HCT116 (cell line): ENCODE measurements at regions of chr10 and their contacts with region 1.

Region 1: DNA sequence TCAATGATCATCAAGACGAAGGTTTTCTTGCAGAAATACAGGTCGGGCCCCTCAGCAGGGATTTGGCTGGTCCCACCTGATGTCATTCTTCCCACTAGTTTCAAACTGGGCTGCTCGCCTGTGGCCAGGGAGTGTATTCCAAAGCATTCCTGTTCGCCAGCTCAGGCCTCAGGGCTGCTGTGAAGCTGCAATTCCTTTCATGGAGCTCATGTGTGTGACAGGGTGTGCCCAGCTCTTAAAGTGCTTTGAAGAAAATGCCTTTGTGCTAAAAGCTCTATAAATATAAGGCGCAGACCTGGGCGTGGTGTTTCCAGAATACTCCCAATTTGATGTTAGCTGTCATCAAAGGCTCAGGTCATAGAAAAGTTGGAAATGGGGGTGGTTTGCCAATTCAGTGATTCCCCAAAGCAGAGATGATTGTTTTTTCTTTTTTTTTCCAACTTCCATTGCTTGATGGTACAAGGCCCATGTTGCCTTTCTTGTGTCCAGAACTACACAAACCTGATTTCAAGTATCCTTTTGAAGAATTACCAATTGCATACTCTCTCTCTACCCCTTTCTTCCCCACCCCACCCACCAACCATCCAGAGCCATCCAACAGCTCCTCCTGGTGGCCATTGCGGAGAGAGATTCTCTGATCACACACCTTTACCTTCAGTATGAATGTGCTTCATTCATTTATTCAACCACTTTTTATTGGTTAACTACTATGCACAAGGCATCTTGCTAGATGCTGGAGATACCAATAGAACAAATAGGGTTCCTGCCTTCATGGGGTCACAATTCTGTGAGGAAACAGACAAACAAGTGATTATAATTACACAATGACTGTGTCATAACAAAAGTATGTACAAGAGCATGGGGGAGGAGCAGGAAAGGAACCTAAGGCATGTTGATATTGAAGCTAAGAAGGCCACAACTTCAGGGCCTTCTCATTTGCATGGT is 297.3 kb upstream of the LYZL1 start:
- DNase-seq: peak; percentile 76
- ATAC-seq: peak; percentile 88
- H3K4me3 ChIP-seq: no peak overlapping the region
- H3K27ac ChIP-seq: peak overlapping the region; percentile 23; the same call in 1 of the 2 replicates
- H3K4me1 ChIP-seq: peaks cover 7 to 32% of the 10 kb centered on the region in 2 experiments
- H3K27me3 ChIP-seq: no peaks in the 10 kb centered on the region
- CTCF ChIP-seq: peak; percentile 88 to 94 (median 93)
- POLR2A ChIP-seq: no peak
- RAD21 ChIP-seq: peak; percentile 97

Region 2: GRCh38 chr10:28628184-28628893 is 363.3 kb before region 1 on chr10:
- CTCF ChIA-PET with region 1: interaction called, 16 read pairs
- POLR2A ChIA-PET with region 1: interaction called, 4 read pairs
- RAD21 ChIA-PET with region 1: no interaction called
- intact Hi-C with region 1: loop called (anchors 1 kb)
- DNase-seq: peak; percentile 63
- ATAC-seq: peak; percentile 96
- H3K4me3 ChIP-seq: no peak overlapping the region
- H3K27ac ChIP-seq: no peak overlapping the region
- H3K4me1 ChIP-seq: peaks cover 3 to 7% of the 10 kb centered on the region in 2 experiments; a peak in 2 of 4 replicates
- H3K27me3 ChIP-seq: no peaks in the 10 kb centered on the region
- CTCF ChIP-seq: peak; percentile 72 to 96 (median 93)
- POLR2A ChIP-seq: no peak
- RAD21 ChIP-seq: peak; percentile 93

Region 3: GRCh38 chr10:28676968-28677887 is 314.4 kb before region 1 on chr10 and contains the start of gene BAMBI:
- CTCF ChIA-PET with region 1: interaction called, 3 read pairs
- POLR2A ChIA-PET with region 1: no interaction called
- RAD21 ChIA-PET with region 1: interaction called in 1 of 2 experiments, 4 read pairs
- intact Hi-C with region 1: loop called (anchors 1 kb)
- DNase-seq: peak; percentile 77
- ATAC-seq: peak; percentile 93
- H3K4me3 ChIP-seq: peak within 1 kb of the TSS; percentile 57 to 77
- H3K27ac ChIP-seq: peak within 1 kb of the TSS; percentile 68; the same call in 1 of the 2 replicates
- H3K4me1 ChIP-seq: peaks cover 6 to 26% of the 10 kb centered on the region in 2 experiments
- H3K27me3 ChIP-seq: peaks cover 6% of the 10 kb centered on the region; the same call in 1 of the 2 replicates
- CTCF ChIP-seq: peak; percentile 32 to 52 (median 38); a peak in 4 of 6 replicates
- POLR2A ChIP-seq: no peak
- RAD21 ChIP-seq: peak; percentile 56
- total RNA-seq, gene BAMBI: 6.2 TPM